Breast epithelium (tissue), 4 donors: ENCODE measurements at regions of chr19 and their contacts with region 1.

Region 1: DNA sequence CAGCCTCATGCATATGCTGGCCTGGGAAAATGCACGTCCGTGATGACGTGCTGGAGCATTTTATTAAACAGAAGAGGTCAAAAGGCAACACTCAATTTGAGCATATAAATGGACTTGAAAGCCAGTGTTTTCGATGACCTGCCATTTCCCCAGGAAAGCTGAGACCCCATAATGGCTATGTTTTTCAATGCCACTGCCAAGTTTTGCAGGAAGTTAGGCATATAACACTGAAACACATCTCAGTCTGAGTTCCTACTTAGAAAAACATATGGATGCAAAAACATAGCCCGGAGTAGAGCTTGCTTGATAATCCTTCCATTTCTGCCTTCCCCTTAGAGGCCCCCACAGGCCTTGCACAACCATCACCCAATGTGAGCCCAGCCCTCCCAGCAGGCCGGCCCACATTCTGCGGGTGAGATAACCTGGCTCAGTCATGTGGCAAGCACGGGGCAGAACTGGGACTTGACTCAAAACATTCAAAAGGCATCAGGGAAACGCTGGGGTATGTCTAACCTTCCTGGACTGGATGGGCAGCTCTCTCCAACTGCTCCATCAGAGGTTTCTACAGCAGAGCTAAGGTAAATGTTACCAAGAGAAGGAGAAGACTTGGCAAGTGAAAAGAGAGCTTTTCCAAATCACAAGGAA is 24.9 kb downstream of the EPS15L1 start:
- DNase-seq: peak in 1 of 2 donors; percentile 45
- H3K4me3 ChIP-seq: no peak overlapping the region
- H3K27ac ChIP-seq: peak overlapping the region; percentile 33 to 71
- H3K4me1 ChIP-seq: peaks cover 3 to 15% of the 10 kb centered on the region in 2 donors
- H3K27me3 ChIP-seq: no peaks in the 10 kb centered on the region
- CTCF ChIP-seq: no peak
- POLR2A ChIP-seq: no peak

Region 2: DNA sequence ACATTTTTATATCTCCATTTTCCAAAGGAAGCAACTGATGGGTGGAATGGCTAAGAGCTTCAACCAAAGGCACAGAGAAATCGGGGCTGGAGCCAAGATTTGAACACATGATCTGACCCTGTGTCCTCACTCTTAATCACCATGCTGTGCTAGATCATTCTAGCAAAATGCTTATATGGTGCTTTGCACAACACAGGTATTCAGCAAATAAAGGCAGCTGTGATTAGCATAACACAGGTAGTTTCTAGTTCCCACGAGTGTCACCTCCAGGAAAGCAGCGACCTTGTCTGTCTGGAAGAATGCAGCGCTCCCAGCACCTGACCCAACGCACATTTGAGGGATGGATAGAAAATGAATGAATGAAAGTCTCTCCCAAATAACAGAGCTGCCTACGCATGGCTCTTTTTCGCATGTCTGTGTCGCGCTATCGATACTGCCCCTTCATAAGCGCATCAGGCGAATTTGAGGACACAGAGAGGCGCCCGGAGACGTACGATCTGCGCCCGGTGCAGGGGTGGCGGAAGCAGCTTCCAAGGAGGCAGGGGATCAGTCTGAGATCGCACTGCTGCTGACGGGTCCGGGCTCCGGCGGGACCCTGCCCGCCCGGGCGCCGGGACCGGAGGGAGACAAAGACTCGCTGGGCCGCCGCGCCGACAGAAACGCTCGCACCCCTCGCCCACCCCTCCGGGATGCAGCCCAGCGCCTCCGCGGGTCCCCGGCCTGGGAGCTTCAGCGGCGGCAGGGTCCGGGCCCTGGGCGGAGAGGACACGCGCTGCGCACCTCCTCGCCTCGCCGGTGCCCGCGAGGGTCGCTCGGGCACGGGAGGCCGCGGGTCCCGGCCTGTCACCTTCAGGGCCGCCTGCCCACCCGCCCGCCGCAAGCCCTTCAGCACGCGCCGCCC is 24.3 kb after region 1 on chr19:
- intact Hi-C with region 1: loop called (anchors 1 kb)
- DNase-seq: no peak
- H3K4me3 ChIP-seq: peak overlapping the region; percentile 77 to 96 (median 95)
- H3K27ac ChIP-seq: peak overlapping the region; percentile 84 to 96
- H3K4me1 ChIP-seq: no peaks in the 10 kb centered on the region
- H3K27me3 ChIP-seq: no peaks in the 10 kb centered on the region
- CTCF ChIP-seq: no peak
- POLR2A ChIP-seq: no peak